Right ventricle myocardium superior (tissue), 1 donor: ENCODE measurements at regions of chr19 and their contacts with region 1.

Region 1: GRCh38 chr19:15629003-15629880 is 11.5 kb upstream of the CYP4F3 start:
- DNase-seq: peak; percentile 89
- ATAC-seq: peak; percentile 92

Region 2: DNA sequence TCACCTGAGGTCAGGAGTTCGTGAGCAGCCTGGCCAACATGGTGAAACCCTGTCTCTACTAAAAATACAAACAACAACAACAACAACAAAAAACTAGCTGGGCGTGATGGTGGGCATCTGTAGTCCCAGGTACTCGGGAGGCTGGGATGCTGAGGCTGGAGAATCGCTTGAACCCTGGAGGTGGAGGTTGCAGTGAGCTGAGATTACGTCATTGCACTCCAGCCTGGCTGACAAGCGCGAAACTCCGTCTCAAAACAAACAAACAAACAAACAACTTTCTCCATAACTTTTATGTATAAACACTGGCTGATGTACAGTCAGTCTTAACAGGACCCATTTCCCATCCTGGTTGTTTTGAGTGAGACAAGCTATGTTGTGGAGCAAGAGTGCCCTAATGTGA is 20.0 kb before region 1 on chr19:
- intact Hi-C with region 1: no loop called
- DNase-seq: no peak
- ATAC-seq: no peak

Region 3: GRCh38 chr19:15696654-15697194 is 67.5 kb after region 1 on chr19:
- intact Hi-C with region 1: no loop called
- DNase-seq: no peak
- ATAC-seq: no peak

Region 4: GRCh38 chr19:15810335-15810734 is 181.1 kb after region 1 on chr19:
- intact Hi-C with region 1: loop called (anchors 5 kb)
- DNase-seq: no peak
- ATAC-seq: no peak

Region 5: GRCh38 chr19:15869109-15869555 is 239.9 kb after region 1 on chr19:
- intact Hi-C with region 1: loop called (anchors 10 kb)
- DNase-seq: no peak
- ATAC-seq: peak; percentile 68

Region 6: GRCh38 chr19:16180611-16181010 is 551.4 kb after region 1 on chr19:
- intact Hi-C with region 1: loop called (anchors 5 kb)
- DNase-seq: no peak
- ATAC-seq: no peak